ENCODE measurements at regions of chr10 and their contacts with region 1.

Region 1: DNA sequence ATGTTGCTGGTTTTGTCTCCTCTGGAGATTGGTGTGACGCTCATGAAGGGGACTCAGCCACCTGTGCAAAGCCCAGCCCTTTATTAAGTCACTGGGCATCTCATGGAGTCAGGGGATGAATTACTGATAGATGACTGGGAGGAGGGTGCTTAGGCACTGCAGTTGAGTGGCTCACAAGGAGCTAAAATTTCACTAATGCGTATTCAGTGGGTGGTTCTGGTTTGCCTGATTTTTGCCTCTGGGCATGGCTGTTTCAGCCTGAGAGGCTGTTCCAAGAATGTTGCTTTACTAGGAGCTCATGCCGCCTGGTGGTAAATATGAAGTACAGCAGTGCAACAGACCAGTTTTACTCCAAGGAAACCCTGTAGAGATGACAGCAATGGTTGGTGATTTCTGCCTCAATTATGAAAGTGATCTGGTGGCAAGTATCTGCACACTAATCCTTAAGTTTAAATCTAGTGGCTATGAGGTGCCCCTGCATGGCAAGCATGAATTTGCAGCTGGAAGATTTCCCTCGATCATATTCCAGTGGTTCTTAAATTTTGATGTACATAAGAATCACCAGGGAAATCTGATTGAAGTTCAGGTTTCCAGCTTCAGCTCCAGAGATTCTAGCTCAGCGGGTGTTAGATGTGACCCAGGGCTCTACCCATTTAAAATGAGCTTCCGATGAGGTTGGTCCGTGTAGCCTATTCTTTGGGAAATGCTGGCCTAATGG is 19.9 kb downstream of the ACTA2 start:
- DNase-seq: peak; percentile 47 to 76 (median 74)
- H3K4me3 ChIP-seq: no peak overlapping the region
- H3K27ac ChIP-seq: no peak overlapping the region
- H3K4me1 ChIP-seq: peaks cover 0 to 8% (median 3%) of the 10 kb centered on the region in 4 experiments
- H3K27me3 ChIP-seq: no peaks in the 10 kb centered on the region

Region 2: DNA sequence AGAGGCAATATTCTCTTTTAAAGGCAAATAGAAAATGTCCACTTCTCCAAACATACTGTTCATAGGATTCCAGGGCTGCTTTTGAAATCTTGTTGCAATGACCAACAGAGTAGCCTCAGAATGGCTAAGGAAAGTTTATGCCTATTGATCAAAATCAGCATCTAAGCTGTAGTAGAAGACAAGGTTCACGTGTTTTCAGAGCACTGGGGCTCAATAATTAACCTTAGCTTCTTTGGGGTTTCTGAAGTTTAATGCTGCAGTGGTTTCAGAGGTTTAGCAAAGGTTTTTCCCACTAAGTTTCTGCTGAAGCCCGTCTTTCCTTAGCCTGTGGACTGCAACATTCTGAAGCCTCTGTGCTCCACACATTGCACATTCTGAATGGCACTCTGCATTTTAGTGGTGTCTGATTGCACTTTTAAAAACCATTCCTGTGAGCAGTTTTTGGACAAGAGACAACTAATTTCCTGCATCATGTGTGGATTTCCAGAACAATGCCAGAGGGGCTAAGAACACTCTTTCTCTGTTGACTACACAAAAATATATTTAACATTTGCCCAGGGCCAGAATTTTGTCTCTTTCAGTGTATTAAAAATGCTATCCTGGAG is 726.8 kb before region 1 on chr10:
- CTCF ChIA-PET with region 1: no interaction called
- POLR2A ChIA-PET with region 1: no interaction called
- DNase-seq: no peak
- H3K4me3 ChIP-seq: no peak overlapping the region
- H3K27ac ChIP-seq: no peak overlapping the region
- H3K4me1 ChIP-seq: no peaks in the 10 kb centered on the region
- H3K27me3 ChIP-seq: no peaks in the 10 kb centered on the region

Region 3: DNA sequence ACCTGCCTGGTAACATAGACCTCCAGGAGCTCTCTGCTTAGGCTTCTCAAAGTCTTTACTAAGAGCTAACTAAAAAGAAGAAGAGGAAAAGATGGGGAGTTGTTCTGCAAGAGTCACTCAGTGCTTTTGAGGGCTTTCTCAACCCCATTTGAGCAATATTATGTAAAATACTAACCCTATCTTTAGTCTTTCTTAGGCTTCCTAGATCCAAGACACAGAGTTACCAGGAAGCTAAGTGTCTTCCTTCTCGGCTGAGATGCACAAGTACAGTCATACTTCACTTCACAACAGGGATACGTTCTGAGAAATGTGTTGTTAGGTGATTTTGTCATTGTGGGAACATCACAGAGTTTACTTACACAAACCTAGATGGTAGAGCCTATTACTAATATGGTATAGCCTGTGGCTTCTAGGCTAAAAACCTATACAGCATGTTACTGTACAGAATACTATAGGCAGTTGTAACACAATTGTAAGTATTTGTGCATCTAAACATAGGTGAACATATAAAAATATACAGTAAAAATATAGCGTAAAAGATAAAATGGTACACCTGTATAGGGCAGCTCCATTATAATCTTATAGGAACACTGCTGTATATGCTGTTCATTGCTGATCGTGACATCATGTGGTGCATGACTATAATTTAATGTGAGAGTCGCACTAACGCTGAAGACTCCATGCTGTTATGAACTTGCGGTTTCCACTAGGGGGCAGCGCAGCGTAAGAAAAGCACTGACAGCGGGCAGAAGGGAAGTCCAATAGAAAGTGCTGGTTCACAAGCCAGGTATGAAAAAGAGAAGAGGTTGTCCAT is 97.4 kb before region 1 on chr10:
- CTCF ChIA-PET with region 1: interaction called, 137 read pairs
- POLR2A ChIA-PET with region 1: interaction called, 4 read pairs
- DNase-seq: peak; percentile 93 to 96 (median 94)
- H3K4me3 ChIP-seq: no peak overlapping the region
- H3K27ac ChIP-seq: no peak overlapping the region
- H3K4me1 ChIP-seq: peaks cover 13 to 38% (median 26%) of the 10 kb centered on the region in 4 experiments
- H3K27me3 ChIP-seq: no peaks in the 10 kb centered on the region

Region 4: GRCh38 chr10:88944813-88945212 is 12.1 kb after region 1 on chr10:
- CTCF ChIA-PET with region 1: interaction called, 28 read pairs
- POLR2A ChIA-PET with region 1: no interaction called
- DNase-seq: no peak
- H3K4me3 ChIP-seq: no peak overlapping the region
- H3K27ac ChIP-seq: no peak overlapping the region
- H3K4me1 ChIP-seq: peaks cover 0 to 7% (median 1%) of the 10 kb centered on the region in 4 experiments
- H3K27me3 ChIP-seq: no peaks in the 10 kb centered on the region

Region 5: DNA sequence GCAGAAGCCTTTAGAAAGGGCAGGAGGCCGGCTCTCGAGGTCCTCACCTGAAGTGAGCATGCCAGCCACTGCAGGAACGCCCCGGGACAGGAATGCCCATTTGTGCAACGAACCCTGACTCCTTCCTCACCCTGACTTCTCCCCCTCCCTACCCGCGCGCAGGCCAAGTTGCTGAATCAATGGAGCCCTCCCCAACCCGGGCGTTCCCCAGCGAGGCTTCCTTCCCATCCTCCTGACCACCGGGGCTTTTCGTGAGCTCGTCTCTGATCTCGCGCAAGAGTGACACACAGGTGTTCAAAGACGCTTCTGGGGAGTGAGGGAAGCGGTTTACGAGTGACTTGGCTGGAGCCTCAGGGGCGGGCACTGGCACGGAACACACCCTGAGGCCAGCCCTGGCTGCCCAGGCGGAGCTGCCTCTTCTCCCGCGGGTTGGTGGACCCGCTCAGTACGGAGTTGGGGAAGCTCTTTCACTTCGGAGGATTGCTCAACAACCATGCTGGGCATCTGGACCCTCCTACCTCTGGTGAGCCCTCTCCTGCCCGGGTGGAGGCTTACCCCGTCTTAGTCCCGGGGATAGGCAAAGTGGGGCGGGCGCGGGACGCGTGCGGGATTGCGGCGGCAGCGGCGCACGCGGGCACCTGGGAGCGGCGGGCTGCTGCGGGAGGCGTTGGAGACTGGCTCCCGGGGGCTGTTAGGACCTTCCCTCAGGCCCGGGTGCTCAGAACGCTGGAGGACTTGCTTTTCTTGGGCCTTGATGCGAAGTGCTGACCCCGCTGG is 57.9 kb after region 1 on chr10 and contains the start of gene FAS:
- CTCF ChIA-PET with region 1: interaction called, 58 read pairs
- POLR2A ChIA-PET with region 1: no interaction called
- DNase-seq: peak; percentile 48 to 75 (median 74)
- H3K4me3 ChIP-seq: peak within 1 kb of the TSS; percentile 75 to 98 (median 94)
- H3K27ac ChIP-seq: peak within 1 kb of the TSS; percentile 48 to 88
- H3K4me1 ChIP-seq: peaks cover 16 to 55% (median 36%) of the 10 kb centered on the region in 4 experiments
- H3K27me3 ChIP-seq: no peaks in the 10 kb centered on the region

Region 6: GRCh38 chr10:89207181-89207800 is 274.6 kb after region 1 on chr10 and contains the start of gene CH25H:
- CTCF ChIA-PET with region 1: interaction called, 13 read pairs
- POLR2A ChIA-PET with region 1: no interaction called
- DNase-seq: peak in 2 of 3 donors; percentile 60 to 70
- H3K4me3 ChIP-seq: peak within 1 kb of the TSS; percentile 42 to 82 (median 63)
- H3K27ac ChIP-seq: no peak within 1 kb of the TSS
- H3K4me1 ChIP-seq: peaks cover 0 to 26% (median 23%) of the 10 kb centered on the region in 4 experiments
- H3K27me3 ChIP-seq: peaks cover 8 to 63% (median 25%) of the 10 kb centered on the region in 5 experiments

Region 7: GRCh38 chr10:89314676-89315075 is 382.0 kb after region 1 on chr10:
- CTCF ChIA-PET with region 1: no interaction called
- POLR2A ChIA-PET with region 1: no interaction called
- DNase-seq: no peak
- H3K4me3 ChIP-seq: no peak overlapping the region
- H3K27ac ChIP-seq: no peak overlapping the region
- H3K4me1 ChIP-seq: no peaks in the 10 kb centered on the region
- H3K27me3 ChIP-seq: no peaks in the 10 kb centered on the region